ENCODE measurements at regions of chr19 and their contacts with region 1.

Region 1: DNA sequence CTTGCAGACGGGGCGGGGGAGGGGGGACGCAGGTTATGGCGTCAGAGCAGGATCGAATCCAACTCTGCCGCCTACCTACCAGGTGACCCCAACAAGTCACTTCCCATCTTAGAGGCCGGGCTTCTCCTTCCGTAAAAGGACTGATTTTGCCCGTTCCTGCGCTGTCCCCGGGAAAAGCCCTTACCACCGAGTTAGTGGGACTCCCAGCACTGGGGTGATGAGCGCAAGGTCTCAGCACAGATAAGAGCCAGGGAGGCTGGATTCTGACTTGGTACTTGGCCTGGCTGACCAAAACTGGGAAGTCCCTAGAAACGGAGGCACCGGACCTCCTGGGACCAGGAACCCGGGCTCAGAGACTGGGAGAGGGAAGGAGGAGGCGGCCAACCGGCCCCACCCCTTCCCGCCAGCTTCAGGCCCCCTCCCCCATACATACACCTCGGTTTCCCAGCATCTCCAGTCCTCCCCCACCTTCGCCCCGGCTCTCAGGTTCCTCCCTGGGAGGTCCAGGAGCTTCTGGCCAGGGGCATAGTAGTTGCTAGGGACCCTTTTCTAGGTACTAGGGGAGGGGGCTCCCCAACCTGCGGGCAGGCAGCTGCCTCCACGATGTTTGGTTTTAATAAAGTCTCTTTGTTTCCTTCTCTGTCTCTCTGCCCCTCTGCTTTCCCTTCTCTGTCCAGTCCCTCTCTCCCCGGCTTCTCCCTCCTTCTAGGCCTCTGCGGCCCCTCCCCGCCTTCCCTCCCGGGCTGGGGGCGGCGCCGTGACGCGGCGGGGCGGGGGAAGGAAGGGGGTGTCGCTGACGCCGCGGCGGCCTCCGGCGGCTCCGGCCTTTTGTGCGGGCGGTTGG is at the start of gene GRAMD1A:
- DNase-seq: peak; percentile 90 to 94
- H3K4me3 ChIP-seq: peak within 1 kb of the TSS; percentile 90
- H3K4me3 Mint-ChIP-seq: peak within 1 kb of the TSS; percentile 99
- H3K27ac Mint-ChIP-seq: peak within 1 kb of the TSS; percentile 98
- H3K4me1 ChIP-seq: peaks cover 53% of the 10 kb centered on the region
- H3K4me1 Mint-ChIP-seq: peaks cover 47% of the 10 kb centered on the region
- H3K27me3 ChIP-seq: no peaks in the 10 kb centered on the region
- H3K27me3 Mint-ChIP-seq: no peaks in the 10 kb centered on the region
- CTCF ChIP-seq: no peak
- total RNA-seq, gene GRAMD1A: 110 and 132 TPM in 2 replicates

Region 2: GRCh38 chr19:33373701-33374421 is 1625.9 kb before region 1 on chr19 and contains the start of gene CEBPG:
- CTCF ChIA-PET with region 1: no interaction called
- POLR2A ChIA-PET with region 1: interaction called, 10 read pairs
- intact Hi-C with region 1: no loop called
- DNase-seq: peak; percentile 66 to 90
- H3K4me3 ChIP-seq: peak within 1 kb of the TSS; percentile 65
- H3K4me3 Mint-ChIP-seq: peak within 1 kb of the TSS; percentile 93
- H3K27ac Mint-ChIP-seq: peak within 1 kb of the TSS; percentile 95
- H3K4me1 ChIP-seq: peaks cover 28% of the 10 kb centered on the region
- H3K4me1 Mint-ChIP-seq: peaks cover 26% of the 10 kb centered on the region
- H3K27me3 ChIP-seq: no peaks in the 10 kb centered on the region
- H3K27me3 Mint-ChIP-seq: no peaks in the 10 kb centered on the region
- CTCF ChIP-seq: peak; percentile 22 to 62
- total RNA-seq, gene CEBPG: 74.9 and 79.4 TPM in 2 replicates

Region 3: GRCh38 chr19:34982275-34982674 is 17.4 kb before region 1 on chr19:
- CTCF ChIA-PET with region 1: no interaction called
- POLR2A ChIA-PET with region 1: interaction called, 10 read pairs
- intact Hi-C with region 1: no loop called
- DNase-seq: no peak
- H3K4me3 ChIP-seq: no peak overlapping the region
- H3K4me3 Mint-ChIP-seq: no peak overlapping the region
- H3K27ac Mint-ChIP-seq: no peak overlapping the region
- H3K4me1 ChIP-seq: no peaks in the 10 kb centered on the region
- H3K4me1 Mint-ChIP-seq: no peaks in the 10 kb centered on the region
- H3K27me3 ChIP-seq: no peaks in the 10 kb centered on the region
- H3K27me3 Mint-ChIP-seq: no peaks in the 10 kb centered on the region
- CTCF ChIP-seq: no peak